Activated naive CD4-positive, alpha-beta T cell treated with anti-CD3 and anti-CD28 coated beads for 36 hours (primary cell): ENCODE measurements at regions of chr11 and their contacts with region 1.

Region 1: DNA sequence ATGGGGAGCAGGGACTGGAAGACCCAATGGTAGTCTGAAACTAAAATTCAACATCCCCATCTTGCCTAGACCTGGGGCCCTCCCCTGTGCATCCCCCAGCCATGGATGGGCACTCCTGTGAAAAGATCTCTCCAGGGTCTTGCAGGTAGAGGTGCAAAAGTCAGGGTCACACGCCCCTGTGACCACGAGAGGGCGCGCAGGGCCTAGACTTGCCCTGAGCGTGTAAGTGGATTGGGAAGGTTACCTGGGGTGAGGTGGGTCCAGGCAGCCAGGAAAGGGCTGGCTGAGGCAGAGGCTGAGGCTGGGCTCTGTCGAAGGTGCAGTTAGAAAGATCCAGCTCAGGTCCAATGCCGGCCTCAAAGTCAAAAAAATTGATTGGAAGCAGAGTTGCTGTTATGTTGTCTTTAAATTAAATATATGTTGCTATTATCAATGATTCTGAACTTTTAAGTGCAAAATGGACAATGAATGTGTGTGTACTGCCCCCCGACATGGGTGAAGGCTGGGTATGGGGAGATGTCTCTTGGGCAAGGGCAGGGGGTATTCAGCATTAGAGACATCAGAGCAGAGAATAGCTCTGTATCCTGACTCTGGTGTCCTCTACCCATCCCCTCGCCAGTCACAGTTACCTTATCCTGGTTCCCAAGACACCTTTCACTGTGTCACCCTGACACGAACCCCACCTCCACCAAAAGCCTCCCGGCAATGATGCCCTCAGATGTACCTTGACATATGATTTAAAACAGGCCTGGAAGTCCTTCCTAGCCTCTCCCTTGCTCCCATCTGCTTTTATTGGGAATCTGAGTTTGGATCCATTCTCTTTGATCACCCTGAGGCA is 4.7 kb upstream of the POU2F3 start:
- DNase-seq: peak; percentile 83
- H3K4me3 Mint-ChIP-seq: no peak overlapping the region
- H3K27ac Mint-ChIP-seq: no peak overlapping the region
- H3K4me1 Mint-ChIP-seq: no peaks in the 10 kb centered on the region
- H3K27me3 Mint-ChIP-seq: peaks cover 40% of the 10 kb centered on the region

Region 2: DNA sequence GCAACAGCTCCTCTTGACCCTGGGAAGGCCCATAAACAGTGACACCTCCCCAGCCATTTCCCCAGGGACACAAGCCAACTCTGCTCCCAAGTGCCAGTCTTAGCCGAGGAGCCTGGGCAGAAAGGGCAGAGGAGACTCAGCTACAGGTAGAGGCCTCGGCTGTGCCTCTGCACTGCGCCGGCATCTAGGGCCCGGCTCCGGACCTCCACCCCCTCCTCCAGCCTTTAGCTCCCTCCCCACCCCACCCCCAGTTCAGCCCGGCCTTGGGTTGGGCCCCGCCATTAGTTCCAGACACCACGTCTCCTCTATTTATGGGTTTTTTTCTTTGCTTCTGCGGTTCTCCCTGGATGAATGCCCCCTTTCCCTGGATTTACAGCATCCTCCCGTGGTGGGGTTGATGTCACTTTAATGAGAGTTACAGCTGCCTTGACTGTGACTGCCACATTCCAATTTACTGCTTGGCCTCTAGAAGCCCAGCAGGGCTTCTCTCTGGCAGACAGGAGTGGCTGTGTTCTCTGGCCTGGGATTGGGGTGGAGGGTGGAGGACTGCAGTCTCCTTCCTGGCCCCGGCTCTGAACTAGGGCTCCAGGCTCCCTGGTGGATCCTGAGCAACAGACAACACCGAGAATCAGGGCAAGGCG is 37.9 kb before region 1 on chr11:
- CTCF ChIA-PET with region 1: no interaction called
- intact Hi-C with region 1: no loop called
- DNase-seq: no peak
- H3K4me3 Mint-ChIP-seq: no peak overlapping the region
- H3K27ac Mint-ChIP-seq: no peak overlapping the region
- H3K4me1 Mint-ChIP-seq: no peaks in the 10 kb centered on the region
- H3K27me3 Mint-ChIP-seq: peaks cover 2% of the 10 kb centered on the region

Region 3: GRCh38 chr11:120248551-120249278 is 13.5 kb after region 1 on chr11:
- CTCF ChIA-PET with region 1: interaction called, 15 read pairs
- intact Hi-C with region 1: no loop called
- DNase-seq: peak; percentile 42
- H3K4me3 Mint-ChIP-seq: no peak overlapping the region
- H3K27ac Mint-ChIP-seq: peak overlapping the region; percentile 78
- H3K4me1 Mint-ChIP-seq: peaks cover 42% of the 10 kb centered on the region
- H3K27me3 Mint-ChIP-seq: peaks cover 64% of the 10 kb centered on the region

Region 4: GRCh38 chr11:120303004-120303637 is 67.9 kb after region 1 on chr11:
- CTCF ChIA-PET with region 1: interaction called, 188 read pairs
- intact Hi-C with region 1: loop called (anchors 1 kb)
- DNase-seq: peak; percentile 74
- H3K4me3 Mint-ChIP-seq: no peak overlapping the region
- H3K27ac Mint-ChIP-seq: no peak overlapping the region
- H3K4me1 Mint-ChIP-seq: no peaks in the 10 kb centered on the region
- H3K27me3 Mint-ChIP-seq: peaks cover 18% of the 10 kb centered on the region

Region 5: DNA sequence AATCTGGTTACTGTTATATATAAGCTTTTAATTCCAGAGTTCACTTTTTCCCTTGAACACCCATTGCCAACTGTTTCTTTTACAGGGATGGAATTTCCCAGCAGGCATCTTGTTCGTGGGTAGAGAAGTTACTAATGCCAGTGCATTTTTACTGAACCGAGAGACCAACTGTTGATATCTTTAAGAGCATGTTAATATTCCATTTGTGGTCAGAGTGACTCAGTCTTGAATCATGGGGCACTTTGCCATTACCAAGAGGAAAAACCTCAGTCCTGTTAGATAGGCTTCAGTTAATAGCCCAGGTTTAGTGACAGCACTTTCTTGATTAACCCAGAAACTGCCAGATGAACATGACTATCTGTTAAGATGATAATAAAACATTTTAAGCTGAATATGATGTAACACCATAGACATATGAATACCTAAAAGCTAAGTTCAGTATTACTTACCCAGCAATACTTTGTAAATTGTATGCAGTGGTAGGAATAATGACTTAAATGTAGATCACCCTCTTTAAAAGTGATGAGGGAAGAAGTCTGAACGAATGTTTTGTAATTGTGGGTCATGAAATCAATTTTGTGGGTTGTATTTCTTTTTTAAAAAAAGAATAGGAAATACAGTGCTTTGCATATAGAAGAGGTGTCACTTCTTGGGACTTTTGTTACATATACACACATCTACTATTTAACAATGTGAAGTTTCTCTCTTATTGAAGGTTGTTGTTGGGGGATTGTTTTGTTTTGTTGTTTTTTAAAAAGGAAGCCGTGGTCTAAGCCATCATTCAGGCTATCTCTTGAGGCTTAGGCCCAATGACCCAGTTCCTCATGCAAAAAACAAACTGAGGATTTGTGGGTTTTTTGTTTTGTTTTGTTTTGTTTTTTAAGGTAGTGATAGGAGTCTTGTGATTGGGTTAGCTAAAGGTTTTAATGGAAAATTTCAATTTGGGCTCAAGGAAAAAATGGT is 197.1 kb after region 1 on chr11:
- CTCF ChIA-PET with region 1: no interaction called
- intact Hi-C with region 1: loop called (anchors 5 kb)
- DNase-seq: peak; percentile 30
- H3K4me3 Mint-ChIP-seq: no peak overlapping the region
- H3K27ac Mint-ChIP-seq: peak overlapping the region; percentile 57
- H3K4me1 Mint-ChIP-seq: peaks cover 17% of the 10 kb centered on the region
- H3K27me3 Mint-ChIP-seq: no peaks in the 10 kb centered on the region

Region 6: DNA sequence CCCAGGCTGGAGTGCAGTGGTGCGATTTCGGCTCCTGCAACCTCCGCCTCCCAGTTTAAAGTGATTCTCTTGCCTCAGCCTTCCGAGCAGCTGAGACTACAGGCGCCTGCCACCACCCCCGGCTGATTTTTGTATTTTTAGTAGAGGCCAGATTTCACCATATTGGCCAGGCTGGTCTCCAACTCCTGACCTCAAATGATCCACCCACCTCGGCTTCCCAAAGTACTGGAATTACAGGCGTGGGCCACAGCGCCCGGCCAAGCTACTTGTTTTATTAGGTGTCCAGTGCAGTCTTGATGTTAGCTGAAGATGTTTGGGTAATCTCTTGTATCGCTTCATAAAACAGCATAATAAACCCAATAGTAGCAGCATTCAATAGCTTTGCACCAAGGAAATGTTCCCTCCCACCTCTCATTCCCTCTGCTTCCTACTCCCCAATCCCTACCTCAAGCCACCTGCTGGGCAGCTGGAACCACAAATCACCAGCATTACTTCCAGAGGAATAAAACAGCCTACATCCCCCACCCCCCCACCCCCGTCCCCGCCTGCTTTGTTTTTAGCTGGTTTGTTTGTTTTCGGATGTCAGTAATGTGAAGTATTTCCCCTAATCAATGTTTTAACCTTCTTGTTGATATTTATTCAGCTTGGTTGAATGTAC is 265.3 kb after region 1 on chr11:
- CTCF ChIA-PET with region 1: no interaction called
- intact Hi-C with region 1: loop called (anchors 10 kb)
- DNase-seq: no peak
- H3K4me3 Mint-ChIP-seq: no peak overlapping the region
- H3K27ac Mint-ChIP-seq: no peak overlapping the region
- H3K4me1 Mint-ChIP-seq: no peaks in the 10 kb centered on the region
- H3K27me3 Mint-ChIP-seq: peaks cover 39% of the 10 kb centered on the region

Region 7: GRCh38 chr11:120682866-120683265 is 447.6 kb after region 1 on chr11:
- CTCF ChIA-PET with region 1: no interaction called
- intact Hi-C with region 1: loop called (anchors 1 kb)
- DNase-seq: no peak
- H3K4me3 Mint-ChIP-seq: no peak overlapping the region
- H3K27ac Mint-ChIP-seq: no peak overlapping the region
- H3K4me1 Mint-ChIP-seq: no peaks in the 10 kb centered on the region
- H3K27me3 Mint-ChIP-seq: peaks cover 18% of the 10 kb centered on the region